ENCODE measurements at regions of chr1 and their contacts with region 1.

Region 1: DNA sequence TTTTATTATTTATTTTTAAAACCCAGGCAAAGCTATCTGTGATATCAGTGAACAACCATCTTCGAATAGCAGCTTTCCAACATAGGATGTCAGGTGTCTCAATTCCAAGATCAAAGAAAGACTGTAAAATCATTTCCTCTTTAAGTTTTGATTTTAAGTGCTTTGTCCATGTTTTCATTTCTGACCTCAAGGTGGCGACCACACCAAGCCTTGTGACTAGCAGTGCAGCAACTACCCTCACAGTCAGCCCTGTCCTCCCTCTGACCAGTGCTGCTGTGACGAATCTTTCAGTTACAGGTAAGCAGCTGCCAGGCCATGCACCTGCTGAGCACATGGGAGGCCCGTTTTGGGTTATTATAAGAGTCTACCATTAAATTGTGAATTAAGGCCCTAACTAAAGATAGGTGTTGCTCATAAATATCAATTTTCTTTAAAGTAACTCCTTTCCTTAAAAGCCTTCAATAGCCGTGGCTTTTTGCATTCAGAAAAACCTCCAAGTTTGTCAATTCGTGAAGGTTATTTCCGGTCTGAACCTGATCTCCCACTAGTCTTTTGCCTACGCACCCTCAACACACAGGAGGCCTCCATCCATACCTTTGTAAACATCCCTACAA is 117.0 kb downstream of the CD247 start:
- DNase-seq: peak; percentile 70
- ATAC-seq: peak; percentile 76
- H3K4me3 ChIP-seq: no peak overlapping the region
- H3K4me3 Mint-ChIP-seq: no peak overlapping the region
- H3K27ac ChIP-seq: no peak overlapping the region
- H3K27ac Mint-ChIP-seq: peak overlapping the region; percentile 18
- H3K4me1 ChIP-seq: no peaks in the 10 kb centered on the region
- H3K4me1 Mint-ChIP-seq: no peaks in the 10 kb centered on the region
- H3K27me3 ChIP-seq: no peaks in the 10 kb centered on the region
- H3K27me3 Mint-ChIP-seq: no peaks in the 10 kb centered on the region
- CTCF ChIP-seq: peak; percentile 82

Region 2: DNA sequence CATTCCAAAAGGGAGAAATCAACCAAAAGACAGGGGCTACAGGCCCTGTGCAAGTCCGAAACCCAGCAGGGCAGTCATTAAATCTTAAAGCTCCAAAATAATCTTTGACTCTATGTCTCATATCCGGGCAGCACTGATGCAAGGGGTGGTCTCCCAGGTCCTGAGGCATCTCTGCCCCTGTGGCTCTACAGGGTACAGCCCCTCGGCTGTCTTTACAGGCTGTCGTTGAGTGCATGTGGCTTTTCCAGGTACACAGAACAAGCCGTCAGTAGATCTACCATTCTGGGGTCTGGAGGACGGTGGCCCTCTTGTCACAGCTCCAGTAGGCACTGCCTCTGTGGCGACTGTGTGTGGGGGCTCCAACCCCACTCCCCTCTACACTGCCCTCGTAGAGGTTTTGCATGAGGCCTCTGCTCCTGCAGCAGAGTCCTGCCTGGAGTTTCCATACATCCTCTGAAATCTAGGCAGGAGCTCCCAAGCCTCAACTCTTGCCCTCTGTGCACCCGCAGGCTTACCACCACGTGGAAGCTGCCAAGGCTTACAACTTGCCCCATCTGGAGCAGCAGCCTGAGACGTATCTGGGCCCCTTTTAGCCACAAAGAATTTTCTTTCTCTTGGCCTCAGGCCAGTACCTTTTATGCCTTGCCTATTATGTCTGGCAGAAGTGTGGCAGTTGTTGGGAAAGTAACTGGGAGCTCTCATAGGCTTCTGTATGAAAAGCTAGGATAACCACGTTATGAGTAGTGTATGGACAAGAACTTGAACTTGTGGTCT is 128.2 kb before region 1 on chr1:
- CTCF ChIA-PET with region 1: interaction called, 38 read pairs
- POLR2A ChIA-PET with region 1: no interaction called
- intact Hi-C with region 1: no loop called
- DNase-seq: no peak
- ATAC-seq: no peak
- H3K4me3 ChIP-seq: no peak overlapping the region
- H3K4me3 Mint-ChIP-seq: no peak overlapping the region
- H3K27ac ChIP-seq: no peak overlapping the region
- H3K27ac Mint-ChIP-seq: no peak overlapping the region
- H3K4me1 ChIP-seq: no peaks in the 10 kb centered on the region
- H3K4me1 Mint-ChIP-seq: peaks cover 39% of the 10 kb centered on the region
- H3K27me3 ChIP-seq: no peaks in the 10 kb centered on the region
- H3K27me3 Mint-ChIP-seq: no peaks in the 10 kb centered on the region
- CTCF ChIP-seq: no peak

Region 3: GRCh38 chr1:167447521-167448136 is 46.3 kb after region 1 on chr1:
- CTCF ChIA-PET with region 1: interaction called, 75 read pairs
- POLR2A ChIA-PET with region 1: no interaction called
- intact Hi-C with region 1: loop called (anchors 1 kb)
- DNase-seq: peak; percentile 70
- ATAC-seq: peak; percentile 96
- H3K4me3 ChIP-seq: peak overlapping the region in 3 of 5 experiments; percentile 4 to 37 (median 6)
- H3K4me3 Mint-ChIP-seq: peak overlapping the region; percentile 70
- H3K27ac ChIP-seq: no peak overlapping the region
- H3K27ac Mint-ChIP-seq: peak overlapping the region; percentile 80
- H3K4me1 ChIP-seq: peaks cover 13 to 28% of the 10 kb centered on the region in 2 donors
- H3K4me1 Mint-ChIP-seq: peaks cover 22% of the 10 kb centered on the region
- H3K27me3 ChIP-seq: no peaks in the 10 kb centered on the region
- H3K27me3 Mint-ChIP-seq: no peaks in the 10 kb centered on the region
- CTCF ChIP-seq: no peak

Region 4: GRCh38 chr1:167737169-167737568 is 335.8 kb after region 1 on chr1:
- CTCF ChIA-PET with region 1: no interaction called
- POLR2A ChIA-PET with region 1: no interaction called
- intact Hi-C with region 1: no loop called
- DNase-seq: no peak
- ATAC-seq: no peak
- H3K4me3 ChIP-seq: no peak overlapping the region
- H3K4me3 Mint-ChIP-seq: no peak overlapping the region
- H3K27ac ChIP-seq: no peak overlapping the region
- H3K27ac Mint-ChIP-seq: no peak overlapping the region
- H3K4me1 ChIP-seq: no peaks in the 10 kb centered on the region
- H3K4me1 Mint-ChIP-seq: peaks cover 10% of the 10 kb centered on the region
- H3K27me3 ChIP-seq: no peaks in the 10 kb centered on the region
- H3K27me3 Mint-ChIP-seq: no peaks in the 10 kb centered on the region
- CTCF ChIP-seq: no peak

Measured in B cell (primary cell).